Activated T-helper 1 cell treated with anti-CD3 and anti-CD28 coated beads, Interleukin-12 subunit alpha, Interleukin-12 subunit beta, Interleukin-2, Interleukin-4 antibody, amounts not matched to agents 30 ng/mL and 10 ng/mL and 1 ng/mL, durations not matched to agents 14 hours and 24 hours and 36 hours (primary cell): ENCODE measurements at regions of chr1 and their contacts with region 1.

Region 1: GRCh38 chr1:156054500-156055280 is at the start of gene LAMTOR2:
- DNase-seq: peak; percentile 95
- H3K4me3 Mint-ChIP-seq: peak within 1 kb of the TSS; percentile 96
- H3K27ac Mint-ChIP-seq: peak within 1 kb of the TSS; percentile 94
- H3K4me1 Mint-ChIP-seq: peaks cover 33% of the 10 kb centered on the region
- H3K27me3 Mint-ChIP-seq: no peaks in the 10 kb centered on the region
- total RNA-seq, gene LAMTOR2: 66.8 and 67.1 TPM in 2 replicates

Region 2: GRCh38 chr1:155681776-155682175 is 372.9 kb before region 1 on chr1:
- intact Hi-C with region 1: no loop called
- DNase-seq: no peak
- H3K4me3 Mint-ChIP-seq: no peak overlapping the region
- H3K27ac Mint-ChIP-seq: no peak overlapping the region
- H3K4me1 Mint-ChIP-seq: peaks cover 39% of the 10 kb centered on the region
- H3K27me3 Mint-ChIP-seq: no peaks in the 10 kb centered on the region

Region 3: DNA sequence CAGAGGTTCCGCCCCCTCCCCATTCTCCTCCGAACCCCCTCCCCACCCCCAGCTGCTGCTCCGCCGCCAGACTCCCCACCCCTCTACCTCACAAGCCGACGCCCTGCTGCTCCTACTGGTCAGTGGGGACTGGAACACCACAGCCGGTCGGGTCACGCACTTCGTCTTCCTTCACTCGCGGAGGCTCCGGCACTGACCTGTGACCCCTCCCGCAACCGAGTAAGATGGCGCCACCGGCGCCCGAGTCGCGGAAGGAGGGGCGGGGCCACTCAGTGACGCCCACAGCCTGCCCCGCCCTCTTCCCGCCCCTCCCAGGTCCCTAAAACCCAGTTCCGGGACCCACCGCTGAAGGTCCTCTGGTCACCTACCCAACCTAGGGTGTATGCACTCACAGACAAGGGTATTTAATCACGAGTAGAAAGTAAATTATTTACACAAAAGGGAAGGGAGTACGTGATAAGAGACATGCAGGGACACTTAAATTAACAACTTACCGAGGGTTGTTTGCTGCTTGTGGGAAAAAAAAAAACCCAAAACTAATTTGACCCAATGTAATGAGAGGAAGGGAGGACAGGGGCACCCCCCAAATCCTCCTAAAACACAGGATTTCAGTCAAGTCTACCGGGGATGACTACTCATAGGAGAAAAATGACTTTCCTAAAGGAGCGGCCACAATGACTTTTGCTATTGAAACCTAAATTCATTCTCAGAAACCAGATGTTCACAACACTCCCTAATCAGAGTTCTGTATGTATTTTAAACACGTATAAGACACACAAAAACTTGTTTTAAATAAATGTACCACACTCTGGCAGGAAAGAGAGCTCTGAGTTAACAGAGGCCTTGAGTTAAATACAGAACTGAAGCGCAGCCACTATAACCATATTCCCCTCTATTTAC is 143.3 kb before region 1 on chr1 and contains the start of gene RIT1:
- intact Hi-C with region 1: loop called (anchors 1 kb)
- DNase-seq: peak; percentile 81
- H3K4me3 Mint-ChIP-seq: peak within 1 kb of the TSS; percentile 98
- H3K27ac Mint-ChIP-seq: peak within 1 kb of the TSS; percentile 97
- H3K4me1 Mint-ChIP-seq: peaks cover 23% of the 10 kb centered on the region
- H3K27me3 Mint-ChIP-seq: peaks cover 2% of the 10 kb centered on the region
- total RNA-seq, gene RIT1: 20.2 and 22.3 TPM in 2 replicates

Region 4: DNA sequence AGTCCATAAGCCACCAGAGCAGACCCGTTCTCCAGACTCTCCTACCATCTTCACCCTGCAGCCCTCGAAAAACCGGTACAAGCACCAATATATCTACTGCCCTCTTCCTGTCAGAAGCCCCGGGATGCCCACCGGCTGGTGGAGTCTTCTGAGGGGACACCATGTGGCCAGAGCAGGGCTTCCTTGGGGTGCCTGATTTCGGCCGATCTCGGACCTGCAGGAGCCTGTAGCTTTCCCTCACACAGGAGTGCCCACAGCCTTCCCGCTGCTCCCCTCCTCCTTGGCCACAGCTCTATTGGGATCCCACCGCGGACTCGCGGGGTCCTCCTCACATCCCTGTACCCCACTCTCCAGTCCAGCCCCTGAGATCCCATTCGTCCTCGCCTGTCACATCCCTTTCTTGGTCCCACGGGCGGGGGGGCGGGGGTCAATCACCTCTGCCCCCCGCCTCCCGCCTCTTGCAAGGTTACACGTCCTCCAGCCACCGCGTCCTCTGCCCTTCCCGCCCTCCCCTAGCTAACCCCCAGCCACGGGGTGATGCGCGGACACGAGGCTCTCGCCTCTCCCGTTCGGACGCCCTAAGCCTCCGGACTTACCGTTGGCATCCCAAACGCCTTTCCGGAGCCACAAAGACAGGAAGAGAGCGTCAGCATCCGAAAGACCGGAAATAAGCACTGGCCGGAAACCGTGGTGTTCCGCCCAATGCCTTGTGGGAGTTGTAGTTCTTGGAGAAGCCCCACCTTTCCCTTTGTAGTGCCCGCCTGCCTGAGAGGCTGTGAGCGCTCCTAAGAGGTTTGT is 34.2 kb before region 1 on chr1 and contains the start of gene SSR2:
- intact Hi-C with region 1: loop called (anchors 1 kb)
- DNase-seq: peak; percentile 85
- H3K4me3 Mint-ChIP-seq: peak within 1 kb of the TSS; percentile 98
- H3K27ac Mint-ChIP-seq: peak within 1 kb of the TSS; percentile 94
- H3K4me1 Mint-ChIP-seq: peaks cover 29% of the 10 kb centered on the region
- H3K27me3 Mint-ChIP-seq: peaks cover 4% of the 10 kb centered on the region
- total RNA-seq, gene SSR2: 195 TPM in 2 replicates

Region 5: DNA sequence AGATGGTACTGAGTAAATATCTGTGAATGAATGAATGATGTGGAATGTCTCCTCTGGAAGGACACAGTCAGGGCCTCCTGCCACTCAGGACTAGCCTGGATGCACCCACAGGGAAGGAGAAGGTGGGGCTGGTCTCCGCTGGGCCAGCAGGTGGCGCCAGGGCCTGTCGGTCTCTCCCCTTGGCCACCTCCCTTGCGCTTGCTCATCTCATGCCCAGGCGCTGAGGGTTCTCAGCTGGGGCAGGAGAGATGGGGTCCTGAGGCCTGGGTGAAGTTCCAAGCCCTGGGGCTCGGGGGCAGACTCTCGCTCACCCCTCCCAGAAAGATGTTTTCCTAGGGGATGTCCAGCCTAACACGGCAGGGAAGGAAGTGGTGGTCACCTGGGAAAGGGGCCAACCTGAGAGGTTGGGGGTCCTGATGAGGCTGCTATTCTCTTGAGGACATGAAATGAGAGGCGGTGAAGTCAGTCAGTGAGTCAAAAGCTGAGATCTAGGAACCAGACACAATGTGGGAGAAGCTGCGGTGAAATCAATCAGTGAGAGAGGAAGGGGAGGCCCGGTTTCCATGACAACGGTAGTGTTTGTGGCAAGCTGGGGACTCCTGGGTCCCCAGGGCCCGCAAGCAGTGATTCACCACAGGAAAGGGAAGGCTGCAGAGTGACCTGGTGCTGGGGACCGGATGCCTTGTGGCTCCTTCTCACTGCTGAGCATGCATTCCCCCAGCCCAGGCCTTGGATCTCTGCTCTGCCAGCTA is 42.1 kb after region 1 on chr1:
- intact Hi-C with region 1: loop called (anchors 1 kb)
- DNase-seq: peak; percentile 82
- H3K4me3 Mint-ChIP-seq: peak overlapping the region; percentile 23
- H3K27ac Mint-ChIP-seq: peak overlapping the region; percentile 88
- H3K4me1 Mint-ChIP-seq: peaks cover 43% of the 10 kb centered on the region
- H3K27me3 Mint-ChIP-seq: peaks cover 25% of the 10 kb centered on the region

Region 6: DNA sequence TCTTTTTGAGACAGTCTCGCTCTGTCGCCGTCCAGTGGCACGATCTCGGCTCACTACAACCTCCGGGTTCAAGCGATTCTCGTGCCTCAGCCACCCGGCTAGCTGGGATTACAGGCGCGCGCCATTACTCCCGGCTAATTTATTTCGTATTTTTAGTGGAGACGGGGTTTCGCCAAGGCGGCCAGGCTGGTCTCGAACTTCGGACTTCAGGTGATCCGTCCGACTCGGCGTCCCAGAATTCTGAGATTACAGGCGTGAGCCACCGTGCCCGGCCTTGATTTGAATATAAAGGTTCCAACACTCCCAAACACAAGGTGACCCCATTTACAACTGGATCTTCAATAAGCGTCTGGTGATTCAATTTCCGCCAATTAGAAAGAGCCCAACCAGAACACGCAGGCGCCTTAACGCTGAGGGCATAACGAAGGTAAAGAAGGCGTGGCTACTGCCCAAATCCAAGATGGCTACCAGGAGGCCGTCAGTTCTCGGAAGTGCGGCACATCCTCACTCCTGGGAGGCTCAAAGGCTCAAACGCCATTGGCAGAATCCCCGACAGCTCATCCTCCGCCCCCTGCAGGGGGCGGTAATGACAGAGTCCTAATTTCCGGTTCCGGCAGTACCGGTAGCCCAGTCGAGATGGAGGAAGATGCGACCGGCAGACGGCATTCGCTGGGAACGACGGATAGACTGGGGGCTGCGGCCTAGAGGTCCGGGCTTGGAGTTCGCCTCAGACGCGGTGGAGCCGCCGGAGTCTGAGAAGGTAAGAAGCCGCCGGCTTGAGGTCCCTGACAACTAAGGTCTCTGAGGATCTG is 139.0 kb after region 1 on chr1 and contains the start of gene SLC25A44:
- intact Hi-C with region 1: loop called (anchors 1 kb)
- DNase-seq: peak; percentile 97
- H3K4me3 Mint-ChIP-seq: peak within 1 kb of the TSS; percentile 94
- H3K27ac Mint-ChIP-seq: peak within 1 kb of the TSS; percentile 87
- H3K4me1 Mint-ChIP-seq: peaks cover 54% of the 10 kb centered on the region
- H3K27me3 Mint-ChIP-seq: no peaks in the 10 kb centered on the region
- total RNA-seq, gene SLC25A44: 67.6 and 79.3 TPM in 2 replicates

Region 7: DNA sequence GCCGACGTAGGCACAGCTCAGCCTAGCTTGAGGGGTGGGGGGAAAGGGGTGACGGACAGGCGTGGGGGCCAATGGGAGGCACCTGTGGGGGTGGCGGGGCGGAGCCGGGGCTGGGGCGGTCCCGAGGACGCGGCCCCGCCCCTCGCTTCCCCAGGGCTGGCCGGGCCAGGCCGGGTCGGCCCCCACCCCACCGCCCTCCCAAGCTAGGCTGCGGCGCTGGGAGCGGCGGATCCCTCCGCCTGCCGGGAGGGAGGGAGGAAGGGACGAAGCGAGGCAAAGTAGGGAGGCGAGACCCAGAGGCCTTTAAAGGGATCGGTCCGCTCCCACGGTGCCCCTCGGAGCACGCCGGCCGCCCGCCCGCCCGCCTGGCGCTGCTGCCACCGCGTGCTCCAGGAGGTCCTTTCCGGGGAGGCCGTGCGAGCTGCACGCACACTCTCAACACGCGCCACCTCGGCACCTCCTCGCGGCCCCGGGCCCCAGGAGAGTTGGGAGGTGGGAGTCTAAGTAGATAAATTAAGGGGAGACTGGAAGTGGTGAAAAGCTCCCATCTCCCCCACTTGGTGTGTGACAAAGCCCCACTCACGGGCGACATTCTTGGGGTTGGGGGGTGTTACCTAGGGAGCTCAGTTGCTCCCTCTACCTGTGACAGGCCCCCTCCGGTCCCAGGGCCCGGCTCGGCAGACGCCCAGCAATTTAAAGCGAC is 446.3 kb after region 1 on chr1:
- intact Hi-C with region 1: loop called (anchors 10 kb)
- DNase-seq: peak; percentile 87
- H3K4me3 Mint-ChIP-seq: peak overlapping the region; percentile 90
- H3K27ac Mint-ChIP-seq: peak overlapping the region; percentile 91
- H3K4me1 Mint-ChIP-seq: peaks cover 78% of the 10 kb centered on the region
- H3K27me3 Mint-ChIP-seq: no peaks in the 10 kb centered on the region